Head of caudate nucleus (tissue), 42 donors: ENCODE measurements at regions of chr22 and their contacts with region 1.

Region 1: DNA sequence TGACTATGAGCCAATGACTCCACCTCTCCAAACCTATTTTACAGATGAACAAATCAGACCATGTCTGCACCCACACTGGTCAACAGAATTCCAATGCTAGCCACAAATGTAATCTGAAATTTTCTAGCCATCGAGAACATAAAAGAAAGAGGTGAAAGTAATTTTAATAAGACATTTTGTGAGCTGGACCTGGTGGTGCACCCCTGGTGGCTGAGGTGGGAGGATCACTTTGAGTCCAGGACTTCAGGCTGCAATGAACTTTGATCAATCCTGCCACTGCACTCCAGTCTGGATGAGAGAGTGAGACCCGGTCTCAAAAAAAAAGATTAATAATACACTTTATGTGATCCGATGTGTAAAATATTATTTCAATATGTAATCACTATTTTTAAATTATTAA is 9.4 kb upstream of the RNF185 start:
- DNase-seq: peak in 1 of 42 donors; percentile 10

Region 2: GRCh38 chr22:30968924-30969539 is 181.6 kb before region 1 on chr22 and contains the start of gene TUG1:
- intact Hi-C with region 1: loop called (anchors 10 kb)
- DNase-seq: peak; percentile 95 to 99 (median 98)

Region 3: DNA sequence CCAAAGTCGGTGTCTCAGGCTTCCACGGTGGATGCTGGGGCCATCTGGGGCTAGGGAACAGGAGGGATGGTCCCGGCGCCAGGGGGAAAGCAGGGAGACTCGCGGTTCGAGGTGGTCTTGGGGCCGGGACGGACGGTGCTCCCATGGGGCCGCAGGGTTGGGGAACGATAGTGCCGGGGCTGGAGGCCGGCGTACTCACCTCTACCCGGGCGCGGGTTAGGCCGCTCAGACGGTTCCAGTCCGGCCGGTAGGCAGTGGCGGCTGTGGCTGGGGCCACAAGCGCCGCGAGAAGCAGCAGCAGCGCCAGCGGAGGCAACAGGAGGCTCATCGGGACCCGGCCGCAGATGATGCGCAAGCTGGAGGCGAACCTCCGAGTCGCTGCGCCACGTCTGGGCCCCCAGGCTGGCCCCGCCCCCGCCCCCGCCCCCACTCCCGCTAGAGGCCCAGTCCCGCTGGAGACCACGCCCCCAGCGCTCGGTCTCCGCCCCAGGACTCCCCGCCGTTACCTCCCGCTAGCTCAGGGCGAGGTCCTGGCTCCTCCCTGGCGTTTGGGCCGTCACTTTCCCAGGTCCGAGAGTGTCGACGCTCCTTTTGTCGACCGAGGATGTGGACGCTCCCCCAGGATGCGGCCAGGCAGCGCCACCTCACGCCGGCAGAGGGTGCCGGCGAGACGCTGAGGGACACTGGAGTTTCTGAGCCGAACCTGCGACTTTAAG is 43.3 kb before region 1 on chr22 and contains the start of gene SELENOM:
- intact Hi-C with region 1: loop called (anchors 10 kb)
- DNase-seq: peak; percentile 81 to 96 (median 92)

Region 4: DNA sequence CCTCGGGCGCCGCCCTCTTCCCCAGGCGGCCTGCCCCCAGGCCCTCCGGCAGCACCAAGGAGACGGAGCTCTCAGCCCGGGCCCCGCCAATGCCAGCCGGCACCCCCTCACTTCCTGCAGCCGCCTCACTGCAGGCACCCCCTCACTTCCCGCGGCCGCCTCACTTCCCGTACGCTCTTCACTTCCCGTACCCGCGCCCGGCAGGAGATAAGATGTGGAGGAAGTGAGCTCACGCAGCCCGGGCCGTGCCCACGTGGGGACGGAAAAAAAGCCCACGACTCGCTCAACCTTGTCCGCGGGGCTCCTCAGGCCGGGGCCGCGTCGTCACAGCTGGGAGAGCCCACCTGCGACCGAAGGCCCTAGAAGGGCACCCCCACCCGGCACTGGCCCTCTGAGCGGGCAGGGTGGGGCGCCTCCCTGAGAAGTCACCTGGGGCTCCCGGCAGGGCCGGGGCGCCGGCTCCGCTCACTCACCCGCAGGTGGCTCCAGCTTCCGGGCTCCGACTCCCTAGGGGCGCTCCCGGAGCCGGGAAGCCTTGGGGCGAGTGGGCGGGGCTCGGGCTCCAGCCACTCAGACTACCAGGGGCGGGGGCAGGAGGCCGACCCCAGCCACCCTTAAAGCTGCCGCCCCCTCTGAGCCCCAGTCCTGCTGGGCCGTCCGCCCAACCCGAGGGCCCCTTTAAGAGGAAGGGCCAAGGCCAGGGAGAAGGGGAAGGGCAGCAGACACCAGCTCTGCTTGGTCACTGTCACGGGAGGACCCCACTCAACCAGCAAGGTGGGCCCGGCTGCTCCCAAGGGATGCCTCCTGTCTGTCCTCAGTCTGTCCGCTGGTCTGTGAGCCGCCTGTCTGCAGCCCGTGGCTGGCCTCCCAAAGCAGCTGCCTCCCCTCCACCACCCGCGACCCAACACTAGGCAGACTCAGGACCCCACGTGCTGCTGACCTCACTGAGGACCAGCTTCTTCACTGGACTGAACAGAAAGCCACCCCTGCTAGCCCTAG is 480.0 kb after region 1 on chr22:
- intact Hi-C with region 1: no loop called
- DNase-seq: peak; percentile 54 to 90 (median 80)